Activated CD8-positive, alpha-beta T cell treated with anti-CD3 and anti-CD28 coated beads, Interleukin-2, amount 10 ng/mL, durations not matched to agents 7 days and 5 days (primary cell): ENCODE measurements at regions of chr1 and their contacts with region 1.

Region 1: DNA sequence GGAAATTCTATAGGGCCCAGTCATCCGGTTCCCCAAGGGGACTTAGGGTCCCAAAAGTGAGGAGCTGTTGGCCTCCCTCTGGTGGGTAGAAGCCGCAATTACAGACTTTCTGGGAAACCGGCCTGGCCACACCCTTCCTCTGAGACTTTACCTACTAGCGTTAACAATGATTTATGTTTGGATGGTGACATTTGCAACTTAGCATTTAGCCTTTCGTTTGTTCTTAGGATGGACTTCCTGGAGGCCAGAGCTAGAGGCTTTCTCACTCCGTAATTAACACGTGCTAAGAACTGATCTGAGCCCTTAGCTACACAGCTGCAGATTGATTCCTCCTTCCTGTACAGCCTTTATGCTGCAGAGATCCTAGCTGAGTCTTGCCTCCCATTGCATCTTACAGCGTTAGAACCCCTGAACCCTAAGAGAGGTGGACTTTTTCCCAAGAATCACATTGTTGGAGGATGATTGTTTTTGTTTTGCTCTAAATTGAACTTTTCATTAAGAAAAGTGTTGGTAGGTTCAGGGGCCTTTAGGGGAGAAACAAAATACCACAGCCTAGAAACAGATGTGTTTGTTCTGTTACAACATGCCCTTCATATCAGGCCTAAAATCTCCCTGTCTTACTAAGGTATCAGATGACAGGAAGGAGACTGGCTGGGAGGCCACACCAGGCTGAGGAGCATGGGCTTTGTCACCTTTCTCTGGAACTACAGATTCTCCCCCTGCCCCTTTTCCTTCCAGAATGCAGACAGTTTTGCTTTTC is 2.0 kb downstream of the S100A11 start:
- DNase-seq: peak; percentile 83
- ATAC-seq: peak; percentile 81
- H3K4me3 Mint-ChIP-seq: peak overlapping the region; percentile 98
- H3K27ac Mint-ChIP-seq: peak overlapping the region; percentile 98
- H3K4me1 Mint-ChIP-seq: peaks cover 43% of the 10 kb centered on the region
- H3K27me3 Mint-ChIP-seq: no peaks in the 10 kb centered on the region

Region 2: GRCh38 chr1:152013664-152014237 is 21.1 kb before region 1 on chr1:
- CTCF ChIA-PET with region 1: interaction called, 27 read pairs
- POLR2A ChIA-PET with region 1: no interaction called
- DNase-seq: peak; percentile 69
- ATAC-seq: no peak
- H3K4me3 Mint-ChIP-seq: no peak overlapping the region
- H3K27ac Mint-ChIP-seq: no peak overlapping the region
- H3K4me1 Mint-ChIP-seq: peaks cover 5% of the 10 kb centered on the region
- H3K27me3 Mint-ChIP-seq: peaks cover 29% of the 10 kb centered on the region